ENCODE measurements at regions of chr7 and their contacts with region 1.

Region 1: GRCh38 chr7:155380221-155380861 is 77.6 kb upstream of the EN2 start:
- DNase-seq: peak; percentile 87
- ATAC-seq: peak; percentile 96
- H3K4me3 Mint-ChIP-seq: no peak overlapping the region
- H3K27ac Mint-ChIP-seq: no peak overlapping the region
- H3K4me1 Mint-ChIP-seq: peaks cover 24% of the 10 kb centered on the region
- H3K27me3 Mint-ChIP-seq: peaks cover 83% of the 10 kb centered on the region
- CTCF ChIP-seq: peak; percentile 85

Region 2: DNA sequence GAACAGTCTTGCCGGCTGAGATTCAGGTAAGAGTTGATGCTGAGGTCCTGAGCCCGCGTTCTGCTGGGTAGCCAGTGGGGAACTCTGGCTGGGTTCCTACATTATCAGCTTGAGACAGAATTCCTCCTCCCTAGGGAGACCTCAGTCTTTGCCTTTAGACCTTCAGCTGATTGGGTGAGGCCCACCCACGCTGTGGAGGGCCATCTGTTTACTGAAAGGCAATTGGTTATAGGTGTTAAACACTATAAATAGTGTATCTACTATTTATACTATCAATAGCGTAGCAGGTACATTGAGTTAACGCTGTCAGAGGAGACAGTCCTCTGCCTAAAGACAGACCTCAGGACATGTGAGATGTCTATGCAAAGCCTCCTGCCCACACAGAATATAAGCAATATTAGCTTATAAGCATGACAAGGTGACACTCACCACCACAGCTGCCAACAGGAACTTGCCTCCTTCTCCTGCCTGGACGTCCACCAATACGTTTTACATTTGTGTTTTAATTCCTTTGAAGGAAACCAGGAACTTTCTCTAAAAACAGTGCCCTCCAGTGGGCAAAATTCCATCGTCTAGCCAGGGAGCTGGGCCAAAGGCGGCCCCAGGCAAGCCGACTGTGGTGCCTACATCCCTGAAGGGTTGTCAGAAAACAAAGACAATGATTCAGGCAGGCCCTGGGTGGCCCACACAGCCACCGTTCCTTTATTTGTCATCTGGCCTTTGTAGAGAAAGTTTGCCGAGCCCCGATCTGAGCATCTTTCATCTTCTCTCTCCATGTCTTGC is 23.8 kb before region 1 on chr7:
- CTCF ChIA-PET with region 1: no interaction called
- POLR2A ChIA-PET with region 1: no interaction called
- intact Hi-C with region 1: no loop called
- DNase-seq: no peak
- ATAC-seq: no peak
- H3K4me3 Mint-ChIP-seq: no peak overlapping the region
- H3K27ac Mint-ChIP-seq: no peak overlapping the region
- H3K4me1 Mint-ChIP-seq: no peaks in the 10 kb centered on the region
- H3K27me3 Mint-ChIP-seq: peaks cover 28% of the 10 kb centered on the region
- CTCF ChIP-seq: peak; percentile 46

Region 3: GRCh38 chr7:155412537-155413253 is 32.4 kb after region 1 on chr7:
- CTCF ChIA-PET with region 1: no interaction called
- POLR2A ChIA-PET with region 1: no interaction called
- intact Hi-C with region 1: no loop called
- DNase-seq: peak; percentile 74
- ATAC-seq: peak; percentile 81
- H3K4me3 Mint-ChIP-seq: no peak overlapping the region
- H3K27ac Mint-ChIP-seq: no peak overlapping the region
- H3K4me1 Mint-ChIP-seq: no peaks in the 10 kb centered on the region
- H3K27me3 Mint-ChIP-seq: peaks cover 13% of the 10 kb centered on the region
- CTCF ChIP-seq: peak; percentile 93

Region 4: GRCh38 chr7:155456738-155457564 is 76.6 kb after region 1 on chr7:
- CTCF ChIA-PET with region 1: no interaction called
- POLR2A ChIA-PET with region 1: no interaction called
- intact Hi-C with region 1: loop called (anchors 5 kb)
- DNase-seq: peak; percentile 63
- ATAC-seq: peak; percentile 34
- H3K4me3 Mint-ChIP-seq: peak overlapping the region; percentile 44
- H3K27ac Mint-ChIP-seq: no peak overlapping the region
- H3K4me1 Mint-ChIP-seq: peaks cover 5% of the 10 kb centered on the region
- H3K27me3 Mint-ChIP-seq: peaks cover 74% of the 10 kb centered on the region
- CTCF ChIP-seq: no peak

Region 5: DNA sequence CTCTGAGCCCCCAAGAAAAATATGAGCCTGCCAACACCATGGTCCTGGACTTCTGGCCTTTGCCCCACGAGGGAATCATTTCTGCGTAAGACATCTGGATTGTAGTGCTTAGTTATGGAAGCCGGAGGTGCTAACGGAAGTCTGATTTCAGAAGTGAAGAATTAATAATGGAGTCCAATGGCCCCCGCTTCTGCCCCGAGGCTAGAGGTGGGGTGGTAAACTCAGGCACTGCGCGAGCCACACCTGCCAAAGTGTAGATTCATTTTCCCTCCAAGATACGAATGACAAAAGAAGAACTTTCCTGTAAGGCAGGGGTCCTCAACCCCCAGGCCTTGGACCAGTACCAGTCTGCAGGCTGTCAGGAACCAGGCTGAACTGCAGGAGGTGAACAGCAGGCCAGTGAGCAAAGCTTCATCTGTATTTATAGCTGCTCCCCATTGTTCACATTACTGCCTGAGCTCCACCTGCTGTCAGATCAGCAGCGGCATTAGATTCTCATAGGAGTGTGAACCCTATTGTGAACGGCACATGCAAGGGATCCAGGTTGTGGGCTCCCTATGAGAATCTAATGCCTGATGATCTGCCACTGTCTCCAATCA is 143.8 kb after region 1 on chr7:
- CTCF ChIA-PET with region 1: interaction called, 17 read pairs
- POLR2A ChIA-PET with region 1: no interaction called
- intact Hi-C with region 1: no loop called
- DNase-seq: no peak
- ATAC-seq: no peak
- H3K4me3 Mint-ChIP-seq: no peak overlapping the region
- H3K27ac Mint-ChIP-seq: no peak overlapping the region
- H3K4me1 Mint-ChIP-seq: no peaks in the 10 kb centered on the region
- H3K27me3 Mint-ChIP-seq: peaks cover 16% of the 10 kb centered on the region
- CTCF ChIP-seq: no peak

Region 6: GRCh38 chr7:155533827-155534690 is 153.7 kb after region 1 on chr7:
- CTCF ChIA-PET with region 1: interaction called, 26 read pairs
- POLR2A ChIA-PET with region 1: no interaction called
- intact Hi-C with region 1: loop called (anchors 10 kb)
- DNase-seq: peak; percentile 67
- ATAC-seq: peak; percentile 85
- H3K4me3 Mint-ChIP-seq: peak overlapping the region; percentile 53
- H3K27ac Mint-ChIP-seq: no peak overlapping the region
- H3K4me1 Mint-ChIP-seq: peaks cover 9% of the 10 kb centered on the region
- H3K27me3 Mint-ChIP-seq: peaks cover 53% of the 10 kb centered on the region
- CTCF ChIP-seq: peak; percentile 76